ENCODE measurements at regions of chr3 and their contacts with region 1.

Region 1: DNA sequence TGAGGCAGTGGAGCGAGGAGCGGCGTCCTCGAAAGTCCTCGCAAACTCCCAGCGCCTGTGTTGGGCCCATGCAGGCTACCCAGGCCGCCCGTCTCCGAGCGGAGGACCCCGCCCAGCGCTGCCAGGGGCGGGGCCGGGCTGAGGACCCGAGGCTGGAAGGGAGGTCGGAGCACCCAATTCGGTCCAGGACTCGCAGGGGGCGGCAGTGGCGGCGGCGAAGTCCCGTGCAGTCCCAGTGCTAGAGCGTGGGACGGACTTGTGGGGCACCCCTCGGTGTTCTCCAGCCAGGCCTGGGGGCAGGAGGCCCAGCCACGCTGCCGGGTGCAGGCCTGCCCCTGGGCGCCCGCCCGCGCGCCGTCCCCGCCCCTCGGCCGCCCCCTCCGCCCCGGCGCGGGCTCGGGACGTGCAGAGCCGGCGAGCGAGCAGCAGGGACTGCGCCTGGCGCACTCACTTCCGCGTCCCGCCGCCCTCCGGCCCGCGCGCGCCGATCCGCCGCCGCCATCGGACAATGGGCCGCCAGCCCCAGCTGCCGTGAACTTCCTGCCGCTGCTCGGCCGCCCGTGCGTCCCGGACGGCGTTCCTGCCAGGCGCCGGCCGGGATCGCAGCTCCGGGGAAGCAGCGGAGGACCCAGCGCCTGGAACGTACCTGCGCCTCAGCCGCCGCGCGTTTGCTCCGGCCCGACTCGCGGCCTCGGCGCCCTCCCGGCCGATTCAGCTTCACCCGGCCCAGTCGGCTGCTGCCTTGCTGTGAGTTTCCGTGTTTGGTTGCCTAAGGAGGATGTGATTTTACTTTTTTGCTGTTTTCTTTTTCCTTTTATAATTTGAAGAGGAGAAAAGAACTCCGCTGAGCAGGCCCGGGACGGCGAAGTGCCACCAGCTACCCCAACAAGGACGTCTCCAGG is 592 bp upstream of the LIMD1 start:
- DNase-seq: peak; percentile 90
- ATAC-seq: peak; percentile 85

Region 2: GRCh38 chr3:44208086-44208485 is 1385.9 kb before region 1 on chr3:
- intact Hi-C with region 1: no loop called
- DNase-seq: no peak
- ATAC-seq: no peak

Region 3: GRCh38 chr3:45516829-45517228 is 77.1 kb before region 1 on chr3:
- intact Hi-C with region 1: loop called (anchors 10 kb)
- DNase-seq: no peak
- ATAC-seq: no peak

Region 4: GRCh38 chr3:45560281-45560971 is 33.5 kb before region 1 on chr3:
- intact Hi-C with region 1: no loop called
- DNase-seq: peak; percentile 85
- ATAC-seq: peak; percentile 94

Region 5: DNA sequence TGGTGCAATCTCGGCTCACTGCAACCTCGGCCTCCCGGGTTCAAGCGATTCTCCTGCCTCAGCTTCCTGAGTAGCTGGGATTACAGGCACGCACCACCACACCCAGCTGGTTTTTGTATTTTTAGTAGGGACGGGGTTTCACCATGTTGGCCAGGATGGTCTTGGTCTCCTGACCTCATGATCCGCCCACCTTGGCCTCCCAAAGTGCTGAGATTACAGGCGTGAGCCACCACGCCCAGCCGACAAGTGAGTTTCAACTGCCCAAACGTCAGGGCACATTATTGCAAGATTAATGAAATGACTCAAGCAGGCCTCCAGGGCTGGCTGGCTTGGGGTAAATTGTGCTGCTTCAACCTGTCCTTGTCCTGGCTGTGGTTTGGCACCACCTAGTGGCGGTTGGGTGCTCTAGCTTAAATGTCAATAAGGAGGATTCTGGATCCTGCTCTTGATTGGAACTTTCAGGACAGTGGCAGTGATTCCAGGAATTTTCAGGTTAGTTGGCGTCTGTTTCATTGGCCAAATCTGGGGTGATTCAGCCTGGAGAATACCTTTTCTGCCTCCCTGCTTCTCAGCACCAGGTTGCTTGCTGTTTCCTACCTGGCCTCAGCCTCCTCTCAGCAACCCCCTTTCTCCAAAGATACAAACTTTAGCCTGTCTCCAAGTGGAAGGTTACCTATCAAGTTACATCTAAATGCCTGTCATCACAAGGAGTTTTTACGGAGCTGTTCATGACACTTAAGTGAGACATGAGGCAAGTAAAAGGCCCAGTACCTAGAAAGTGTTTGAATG is 62.8 kb after region 1 on chr3:
- intact Hi-C with region 1: loop called (anchors 5 kb)
- DNase-seq: peak; percentile 92
- ATAC-seq: peak; percentile 81